CD8-positive, alpha-beta T cell (primary cell): ENCODE measurements at regions of chr2 and their contacts with region 1.

Region 1: DNA sequence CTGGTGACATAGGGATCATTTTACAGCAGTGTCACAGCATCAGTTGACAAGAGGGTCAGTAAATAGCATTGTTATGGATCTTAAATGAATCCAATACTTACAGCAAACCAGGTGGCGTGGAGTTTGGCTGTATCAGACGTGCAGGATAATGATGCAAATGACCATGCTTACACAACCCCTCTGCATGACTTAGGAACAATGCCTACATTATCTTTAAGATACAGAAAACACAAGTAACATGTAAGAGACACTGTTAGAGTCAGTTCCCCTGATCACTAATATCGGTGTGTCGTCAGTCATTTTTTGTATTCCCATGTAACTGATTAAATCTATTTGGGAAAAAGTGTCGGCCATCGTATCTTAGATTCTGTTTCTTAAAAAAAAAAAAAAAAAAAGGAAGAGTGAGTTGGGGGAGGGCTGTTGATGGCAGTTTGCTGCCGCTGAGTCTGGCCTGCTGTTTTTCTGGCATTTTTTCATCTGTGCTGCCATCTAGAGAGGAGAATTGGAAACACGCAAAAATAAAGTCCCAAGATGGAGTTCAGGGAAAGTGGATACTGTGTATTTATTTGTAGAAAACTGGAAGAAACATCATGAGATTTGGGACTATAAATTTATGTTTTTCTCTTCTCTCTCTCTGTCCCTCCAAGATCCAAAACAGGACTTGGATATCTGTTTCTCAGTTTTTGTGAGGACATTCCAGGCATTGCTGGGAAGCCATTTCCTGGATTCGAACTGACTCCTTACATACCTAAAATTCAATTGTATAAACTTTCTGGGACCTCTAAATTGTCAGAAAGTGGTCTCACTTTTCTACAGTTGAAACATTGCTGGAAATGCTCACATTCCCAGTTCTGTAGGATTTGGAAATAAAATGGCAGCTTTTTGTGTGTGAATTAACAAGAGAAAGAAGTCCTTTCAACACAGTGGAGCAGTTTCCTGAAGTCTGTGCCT is 60.3 kb upstream of the AGPS start:
- DNase-seq: peak in 8 of 9 experiments; percentile 6 to 79 (median 33)
- ATAC-seq: peak; percentile 87
- H3K4me3 ChIP-seq: no peak overlapping the region
- H3K4me3 Mint-ChIP-seq: no peak overlapping the region
- H3K27ac ChIP-seq: no peak overlapping the region
- H3K27ac Mint-ChIP-seq: no peak overlapping the region
- H3K4me1 ChIP-seq: peaks cover 6% of the 10 kb centered on the region
- H3K4me1 Mint-ChIP-seq: peaks cover 10% of the 10 kb centered on the region
- H3K27me3 ChIP-seq: no peaks in the 10 kb centered on the region
- H3K27me3 Mint-ChIP-seq: no peaks in the 10 kb centered on the region
- CTCF ChIP-seq: peak; percentile 73

Region 2: GRCh38 chr2:175903384-175903936 is 1428.9 kb before region 1 on chr2:
- CTCF ChIA-PET with region 1: no interaction called
- POLR2A ChIA-PET with region 1: no interaction called
- intact Hi-C with region 1: no loop called
- DNase-seq: no peak
- ATAC-seq: no peak
- H3K4me3 ChIP-seq: no peak overlapping the region
- H3K4me3 Mint-ChIP-seq: no peak overlapping the region
- H3K27ac ChIP-seq: no peak overlapping the region
- H3K27ac Mint-ChIP-seq: no peak overlapping the region
- H3K4me1 ChIP-seq: no peaks in the 10 kb centered on the region
- H3K4me1 Mint-ChIP-seq: no peaks in the 10 kb centered on the region
- H3K27me3 ChIP-seq: no peaks in the 10 kb centered on the region
- H3K27me3 Mint-ChIP-seq: peaks cover 20% of the 10 kb centered on the region
- CTCF ChIP-seq: no peak

Region 3: DNA sequence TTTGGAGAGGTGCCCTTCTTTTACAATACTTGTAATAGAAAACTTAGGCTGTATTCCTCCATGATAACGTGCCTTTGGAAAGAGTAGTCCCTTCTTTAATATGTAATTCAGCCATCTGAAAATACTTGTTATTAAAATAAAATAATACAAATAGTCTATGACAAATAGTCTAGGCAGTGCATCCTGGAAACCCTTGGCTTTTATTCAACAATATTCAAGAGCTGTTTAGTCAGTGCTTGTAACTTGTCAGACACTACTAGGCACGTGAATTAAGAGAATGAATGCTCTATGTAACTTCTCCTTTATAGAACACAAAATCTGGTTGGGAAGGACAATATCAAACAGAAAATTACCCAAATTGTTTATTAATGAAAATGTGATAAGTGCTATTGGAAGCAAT is 674.9 kb before region 1 on chr2:
- CTCF ChIA-PET with region 1: no interaction called
- POLR2A ChIA-PET with region 1: no interaction called
- intact Hi-C with region 1: no loop called
- DNase-seq: no peak
- ATAC-seq: no peak
- H3K4me3 ChIP-seq: no peak overlapping the region
- H3K4me3 Mint-ChIP-seq: no peak overlapping the region
- H3K27ac ChIP-seq: no peak overlapping the region
- H3K27ac Mint-ChIP-seq: no peak overlapping the region
- H3K4me1 ChIP-seq: peaks cover 11% of the 10 kb centered on the region
- H3K4me1 Mint-ChIP-seq: peaks cover 12% of the 10 kb centered on the region
- H3K27me3 ChIP-seq: peaks cover 0 to 2% of the 10 kb centered on the region in 2 experiments
- H3K27me3 Mint-ChIP-seq: peaks cover 40% of the 10 kb centered on the region
- CTCF ChIP-seq: no peak

Region 4: GRCh38 chr2:177296040-177296439 is 36.3 kb before region 1 on chr2:
- CTCF ChIA-PET with region 1: interaction called, 11 read pairs
- POLR2A ChIA-PET with region 1: no interaction called
- intact Hi-C with region 1: loop called (anchors 1 to 2 kb)
- DNase-seq: peak in 2 of 9 experiments; percentile 53 to 68
- ATAC-seq: peak; percentile 64
- H3K4me3 ChIP-seq: no peak overlapping the region
- H3K4me3 Mint-ChIP-seq: no peak overlapping the region
- H3K27ac ChIP-seq: no peak overlapping the region
- H3K27ac Mint-ChIP-seq: no peak overlapping the region
- H3K4me1 ChIP-seq: peaks cover 13% of the 10 kb centered on the region
- H3K4me1 Mint-ChIP-seq: peaks cover 7% of the 10 kb centered on the region
- H3K27me3 ChIP-seq: no peaks in the 10 kb centered on the region
- H3K27me3 Mint-ChIP-seq: no peaks in the 10 kb centered on the region
- CTCF ChIP-seq: peak; percentile 63

Region 5: GRCh38 chr2:177353187-177353478 is 20.8 kb after region 1 on chr2:
- CTCF ChIA-PET with region 1: interaction called, 11 read pairs
- POLR2A ChIA-PET with region 1: no interaction called
- intact Hi-C with region 1: no loop called
- DNase-seq: no peak
- ATAC-seq: no peak
- H3K4me3 ChIP-seq: no peak overlapping the region
- H3K4me3 Mint-ChIP-seq: no peak overlapping the region
- H3K27ac ChIP-seq: no peak overlapping the region
- H3K27ac Mint-ChIP-seq: no peak overlapping the region
- H3K4me1 ChIP-seq: no peaks in the 10 kb centered on the region
- H3K4me1 Mint-ChIP-seq: peaks cover 8% of the 10 kb centered on the region
- H3K27me3 ChIP-seq: no peaks in the 10 kb centered on the region
- H3K27me3 Mint-ChIP-seq: no peaks in the 10 kb centered on the region
- CTCF ChIP-seq: no peak

Region 6: GRCh38 chr2:177413703-177414102 is 81.4 kb after region 1 on chr2:
- CTCF ChIA-PET with region 1: interaction called, 86 read pairs
- POLR2A ChIA-PET with region 1: no interaction called
- intact Hi-C with region 1: loop called (anchors 1 kb)
- DNase-seq: no peak
- ATAC-seq: no peak
- H3K4me3 ChIP-seq: no peak overlapping the region
- H3K4me3 Mint-ChIP-seq: no peak overlapping the region
- H3K27ac ChIP-seq: no peak overlapping the region
- H3K27ac Mint-ChIP-seq: peak overlapping the region; percentile 19
- H3K4me1 ChIP-seq: no peaks in the 10 kb centered on the region
- H3K4me1 Mint-ChIP-seq: peaks cover 37% of the 10 kb centered on the region
- H3K27me3 ChIP-seq: no peaks in the 10 kb centered on the region
- H3K27me3 Mint-ChIP-seq: no peaks in the 10 kb centered on the region
- CTCF ChIP-seq: no peak

Region 7: GRCh38 chr2:177604271-177605065 is 272.2 kb after region 1 on chr2:
- CTCF ChIA-PET with region 1: interaction called, 7 read pairs
- POLR2A ChIA-PET with region 1: no interaction called
- intact Hi-C with region 1: loop called (anchors 1 to 5 kb)
- DNase-seq: peak in 2 of 9 experiments; percentile 30 to 45
- ATAC-seq: no peak
- H3K4me3 ChIP-seq: no peak overlapping the region
- H3K4me3 Mint-ChIP-seq: no peak overlapping the region
- H3K27ac ChIP-seq: no peak overlapping the region
- H3K27ac Mint-ChIP-seq: no peak overlapping the region
- H3K4me1 ChIP-seq: no peaks in the 10 kb centered on the region
- H3K4me1 Mint-ChIP-seq: no peaks in the 10 kb centered on the region
- H3K27me3 ChIP-seq: no peaks in the 10 kb centered on the region
- H3K27me3 Mint-ChIP-seq: peaks cover 9% of the 10 kb centered on the region
- CTCF ChIP-seq: peak; percentile 38

Region 8: DNA sequence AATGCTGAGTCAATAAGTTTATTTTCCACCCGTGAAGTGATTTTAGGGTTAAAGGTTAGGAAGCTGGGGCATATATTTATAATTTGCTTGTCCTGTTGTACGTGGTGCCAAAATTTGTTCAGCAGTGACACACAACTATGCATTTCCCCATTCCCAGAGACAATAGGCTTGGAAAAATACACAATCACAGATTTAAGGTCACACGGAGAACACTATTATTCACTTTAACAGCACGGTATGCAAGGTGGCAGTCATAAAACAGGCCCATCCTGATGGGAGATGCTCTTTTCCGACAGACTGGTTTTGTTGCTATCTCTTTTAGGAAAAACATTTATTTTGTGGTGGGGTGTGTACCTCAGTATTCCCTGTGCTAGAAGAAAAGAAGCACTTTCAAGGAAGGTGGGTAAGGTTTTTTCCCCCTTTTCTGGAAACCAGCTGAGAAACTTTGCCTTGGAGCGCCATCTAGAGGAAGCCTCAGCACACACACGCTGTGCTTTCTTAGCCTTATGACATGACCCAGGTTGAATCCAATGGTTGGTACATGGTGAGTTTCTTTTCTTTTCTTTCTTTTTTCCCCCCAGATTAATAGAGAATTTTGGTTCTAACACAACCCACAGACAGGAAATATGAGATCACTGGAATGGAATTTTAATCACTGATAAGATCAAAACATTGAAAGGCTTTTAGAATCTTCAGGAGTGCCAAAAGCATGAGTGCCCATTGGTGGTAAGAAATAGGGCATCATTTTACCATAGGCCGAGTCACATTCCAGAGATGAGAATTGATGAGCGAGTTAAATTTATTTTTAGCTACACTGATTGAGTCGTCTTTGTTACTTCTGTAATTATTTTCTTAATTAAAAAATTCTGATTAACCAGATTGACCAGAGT is 392.3 kb after region 1 on chr2:
- CTCF ChIA-PET with region 1: interaction called, 10 read pairs
- POLR2A ChIA-PET with region 1: no interaction called
- intact Hi-C with region 1: loop called (anchors 1 to 2 kb)
- DNase-seq: peak in 8 of 9 experiments; percentile 10 to 56 (median 35)
- ATAC-seq: no peak
- H3K4me3 ChIP-seq: no peak overlapping the region
- H3K4me3 Mint-ChIP-seq: no peak overlapping the region
- H3K27ac ChIP-seq: no peak overlapping the region
- H3K27ac Mint-ChIP-seq: no peak overlapping the region
- H3K4me1 ChIP-seq: no peaks in the 10 kb centered on the region
- H3K4me1 Mint-ChIP-seq: no peaks in the 10 kb centered on the region
- H3K27me3 ChIP-seq: no peaks in the 10 kb centered on the region
- H3K27me3 Mint-ChIP-seq: peaks cover 21% of the 10 kb centered on the region
- CTCF ChIP-seq: peak; percentile 54